Activated CD4-positive, alpha-beta memory T cell treated with anti-CD3 and anti-CD28 coated beads for 36 hours (primary cell): ENCODE measurements at regions of chr6 and their contacts with region 1.

Region 1: DNA sequence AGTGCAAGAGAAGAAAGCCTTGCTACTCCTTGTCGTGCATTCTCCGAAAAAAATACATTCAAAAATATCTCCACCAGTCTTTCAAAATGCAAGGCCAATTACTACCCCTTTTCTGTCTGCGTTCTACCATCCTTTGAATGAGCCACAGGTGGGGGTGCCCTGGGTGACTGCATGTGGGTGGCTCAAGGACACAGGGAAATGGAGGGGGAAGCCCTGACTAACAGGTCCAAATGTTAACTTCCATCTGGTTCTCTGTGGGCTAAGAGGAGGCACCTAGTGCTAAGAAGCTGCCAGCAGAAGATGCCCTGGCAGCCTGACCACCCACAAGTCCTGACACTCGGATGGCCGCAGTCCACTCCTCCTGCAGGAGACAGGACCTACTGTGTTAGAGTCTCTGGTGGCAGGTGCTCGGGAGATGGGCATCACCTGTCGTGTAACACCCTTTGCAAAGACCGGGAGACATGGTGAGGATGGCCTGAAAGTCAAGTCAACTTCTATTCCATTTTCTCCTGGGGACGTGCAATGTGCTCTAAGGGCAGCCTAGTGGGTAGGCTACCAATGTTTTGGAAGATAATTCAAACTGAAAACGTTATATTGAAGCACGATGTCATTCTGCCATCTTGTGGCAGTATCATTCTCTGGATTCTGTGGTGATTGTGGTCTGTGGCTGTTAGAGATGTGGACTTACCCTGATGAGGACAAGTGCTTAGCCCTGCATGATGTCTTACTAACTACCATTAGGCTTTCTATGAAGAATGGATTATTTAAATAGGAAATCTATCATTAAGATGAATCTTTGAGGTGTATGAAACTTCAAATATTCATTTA is 27.4 kb upstream of the IGF2R start:
- DNase-seq: peak; percentile 49
- H3K4me3 Mint-ChIP-seq: no peak overlapping the region
- H3K27ac Mint-ChIP-seq: no peak overlapping the region
- H3K4me1 Mint-ChIP-seq: peaks cover 3% of the 10 kb centered on the region
- H3K27me3 Mint-ChIP-seq: peaks cover 8% of the 10 kb centered on the region

Region 2: GRCh38 chr6:159169193-159169555 is 772.3 kb before region 1 on chr6 and contains the start of gene FNDC1:
- CTCF ChIA-PET with region 1: no interaction called
- POLR2A ChIA-PET with region 1: no interaction called
- intact Hi-C with region 1: loop called (anchors 5 kb)
- DNase-seq: peak; percentile 71
- H3K4me3 Mint-ChIP-seq: peak within 1 kb of the TSS; percentile 61
- H3K27ac Mint-ChIP-seq: no peak within 1 kb of the TSS
- H3K4me1 Mint-ChIP-seq: peaks cover 15% of the 10 kb centered on the region
- H3K27me3 Mint-ChIP-seq: peaks cover 73% of the 10 kb centered on the region
- total RNA-seq, gene FNDC1: not detected

Region 3: DNA sequence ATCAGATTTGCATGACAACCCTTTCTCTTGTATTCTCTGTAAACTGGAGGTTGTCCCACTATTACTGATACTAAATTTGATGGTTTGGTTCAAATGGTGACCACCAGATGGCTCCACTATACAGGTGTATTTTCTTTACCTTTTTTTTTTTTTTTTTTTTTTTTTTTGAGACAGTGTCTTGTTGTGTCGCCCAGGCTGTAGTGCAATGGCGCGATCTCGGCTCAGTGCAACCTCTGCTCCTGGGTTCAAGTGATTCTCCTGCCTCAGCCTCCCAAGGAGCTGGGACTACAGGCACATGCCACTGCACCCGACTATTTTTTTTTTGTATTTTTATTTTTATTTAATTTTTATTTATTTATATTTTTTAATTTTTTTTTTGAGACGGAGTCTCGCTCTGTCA is 220.8 kb before region 1 on chr6:
- CTCF ChIA-PET with region 1: interaction called, 3 read pairs
- POLR2A ChIA-PET with region 1: no interaction called
- intact Hi-C with region 1: loop called (anchors 2 kb)
- DNase-seq: no peak
- H3K4me3 Mint-ChIP-seq: no peak overlapping the region
- H3K27ac Mint-ChIP-seq: no peak overlapping the region
- H3K4me1 Mint-ChIP-seq: peaks cover 20% of the 10 kb centered on the region
- H3K27me3 Mint-ChIP-seq: no peaks in the 10 kb centered on the region

Region 4: DNA sequence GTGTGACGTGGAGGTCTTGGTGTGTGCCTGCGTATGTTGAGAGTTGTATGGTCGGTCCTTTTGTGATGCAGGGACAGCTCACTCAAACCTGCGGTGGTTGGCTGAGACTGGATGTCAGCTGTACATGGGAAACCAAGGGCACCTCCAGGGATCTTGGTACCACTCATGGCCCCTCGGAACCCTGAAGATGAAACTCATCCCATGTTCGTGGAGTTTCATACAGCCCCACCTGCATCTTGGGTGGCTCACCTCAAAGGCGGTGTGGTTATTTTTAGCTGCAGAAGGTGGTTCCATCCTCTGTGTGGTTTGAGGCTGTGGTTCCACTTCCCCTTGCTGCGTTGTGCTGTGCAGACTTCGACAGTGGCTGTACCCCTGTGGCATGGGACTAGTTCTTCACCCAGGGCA is 127.6 kb after region 1 on chr6:
- CTCF ChIA-PET with region 1: no interaction called
- POLR2A ChIA-PET with region 1: no interaction called
- intact Hi-C with region 1: no loop called
- DNase-seq: peak; percentile 37
- H3K4me3 Mint-ChIP-seq: no peak overlapping the region
- H3K27ac Mint-ChIP-seq: no peak overlapping the region
- H3K4me1 Mint-ChIP-seq: peaks cover 21% of the 10 kb centered on the region
- H3K27me3 Mint-ChIP-seq: no peaks in the 10 kb centered on the region